GM18951 (cell line): ENCODE measurements at regions of chr10 and their contacts with region 1.

Region 1: DNA sequence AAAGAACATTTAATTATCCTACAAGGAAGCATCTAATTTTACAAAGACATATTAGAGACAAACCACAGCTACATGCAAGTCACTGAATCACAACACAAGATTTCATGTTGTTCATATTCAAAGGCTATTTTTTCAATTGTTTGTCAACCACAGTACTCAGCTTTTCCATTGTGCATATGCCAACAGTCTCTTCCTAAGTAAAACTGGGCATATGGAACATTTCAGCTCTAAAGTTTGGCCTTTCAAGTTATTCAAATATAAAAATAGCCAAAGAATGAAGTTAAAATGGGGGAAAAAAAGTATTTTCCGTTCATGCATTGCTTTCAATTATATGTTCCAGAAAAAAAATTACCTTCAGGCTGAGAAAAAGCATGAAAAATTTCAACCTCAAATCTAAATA is 537.9 kb downstream of the PLXDC2 start:
- POLR2A ChIP-seq: no peak

Region 2: DNA sequence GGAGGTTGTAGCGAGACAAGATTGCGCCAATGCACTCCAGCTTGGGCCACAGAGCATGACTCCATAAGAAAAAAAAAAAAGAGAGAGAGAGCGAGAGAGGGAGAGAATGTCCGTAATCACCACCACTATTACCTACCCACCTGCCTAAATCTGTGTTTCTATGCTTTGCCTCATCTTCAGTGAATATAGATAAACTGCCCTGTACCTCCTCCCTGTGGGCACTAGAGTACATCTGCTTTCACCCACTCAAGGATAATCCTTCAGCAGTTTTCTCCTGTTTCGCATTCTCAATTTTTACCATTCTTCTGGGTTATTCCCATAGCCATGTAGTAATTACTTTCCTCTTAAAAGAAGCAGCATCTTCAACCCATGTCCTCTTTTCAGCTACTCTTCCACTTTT is 1325.5 kb before region 1 on chr10:
- in situ Hi-C with region 1: loop called (anchors 10 kb)
- POLR2A ChIP-seq: no peak

Region 3: DNA sequence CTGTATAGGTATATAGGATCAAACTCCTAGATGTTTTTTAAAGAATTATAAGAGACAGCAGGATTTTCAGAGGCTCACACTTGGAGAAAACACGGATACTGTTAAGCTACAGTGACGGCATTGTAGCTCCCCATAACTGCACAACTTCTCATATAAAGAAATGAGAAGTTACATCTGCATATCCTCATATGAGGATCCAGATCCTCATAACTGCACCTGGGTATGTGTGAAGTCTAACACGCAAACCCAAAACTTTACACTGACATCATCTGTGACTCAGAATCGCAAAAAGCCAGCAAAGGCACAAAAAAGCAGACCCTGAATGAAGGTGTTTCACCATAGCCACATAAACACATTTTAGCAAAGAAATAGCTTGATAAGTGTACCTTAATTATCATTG is 508.8 kb after region 1 on chr10:
- in situ Hi-C with region 1: no loop called
- POLR2A ChIP-seq: no peak